IMR-90 (cell line): ENCODE measurements at regions of chr17 and their contacts with region 1.

Region 1: GRCh38 chr17:49952209-49952911 is 16.6 kb upstream of the DLX4 start:
- DNase-seq: peak; percentile 40
- ATAC-seq: peak; percentile 85
- H3K4me3 ChIP-seq: no peak overlapping the region
- H3K27ac ChIP-seq: no peak overlapping the region
- H3K4me1 ChIP-seq: no peaks in the 10 kb centered on the region
- H3K27me3 ChIP-seq: peaks cover 79% of the 10 kb centered on the region
- CTCF ChIP-seq: peak; percentile 68
- POLR2A ChIP-seq: no peak
- RAD21 ChIP-seq: peak; percentile 56

Region 2: GRCh38 chr17:49399995-49400394 is 552.4 kb before region 1 on chr17:
- CTCF ChIA-PET with region 1: no interaction called
- POLR2A ChIA-PET with region 1: interaction called, 15 read pairs
- dilution Hi-C with region 1: no loop called
- in situ Hi-C with region 1: no loop called
- intact Hi-C with region 1: no loop called
- DNase-seq: no peak
- ATAC-seq: no peak
- H3K4me3 ChIP-seq: no peak overlapping the region
- H3K27ac ChIP-seq: no peak overlapping the region
- H3K4me1 ChIP-seq: no peaks in the 10 kb centered on the region
- H3K27me3 ChIP-seq: peaks cover 12% of the 10 kb centered on the region
- CTCF ChIP-seq: no peak
- POLR2A ChIP-seq: no peak
- RAD21 ChIP-seq: no peak